Adrenal gland (tissue), 19 donors: ENCODE measurements at regions of chr5 and their contacts with region 1.

Region 1: DNA sequence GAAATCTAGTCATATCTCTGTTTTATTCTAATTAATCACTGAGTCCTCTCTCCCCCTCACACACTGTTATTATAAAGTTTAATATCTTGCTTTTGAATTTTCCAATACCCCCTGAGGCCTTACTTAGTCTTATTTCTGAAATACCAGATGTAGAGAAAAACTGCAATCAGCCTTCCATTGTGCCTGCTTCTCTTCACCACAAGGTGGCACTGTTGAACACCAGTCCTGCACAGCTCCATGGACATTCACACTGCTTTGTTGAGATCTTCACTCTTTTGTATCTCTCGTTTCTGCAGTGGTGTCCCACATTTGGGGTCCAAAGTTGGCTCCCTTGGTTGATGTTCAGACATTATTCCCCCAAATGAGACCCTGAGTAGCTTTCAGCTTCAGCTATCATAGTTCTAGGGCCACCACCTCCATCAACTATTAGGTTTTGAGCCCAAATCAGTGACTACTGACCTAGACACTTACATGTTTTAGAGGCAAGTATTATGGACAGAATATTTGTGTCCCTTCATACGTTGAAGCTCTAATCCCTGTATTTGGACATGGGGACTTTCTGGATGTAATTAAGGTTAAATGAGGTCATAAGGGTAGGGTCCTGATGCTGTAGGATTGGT is 24.3 kb downstream of the BOD1 start:
- DNase-seq: peak in 1 of 7 donors; percentile 30
- H3K4me3 ChIP-seq: no peak overlapping the region
- H3K27ac ChIP-seq: no peak overlapping the region
- H3K4me1 ChIP-seq: peaks cover 17 to 23% of the 10 kb centered on the region in 2 donors
- H3K27me3 ChIP-seq: no peaks in the 10 kb centered on the region
- CTCF ChIP-seq: peak in 5 of 6 experiments; percentile 10 to 52 (median 33)
- POLR2A ChIP-seq: no peak

Region 2: GRCh38 chr5:173451031-173451430 is 141.1 kb before region 1 on chr5:
- intact Hi-C with region 1: loop called in 1 of 2 experiments (anchors 10 kb)
- DNase-seq: peak in 2 of 7 donors; percentile 5 to 32
- H3K4me3 ChIP-seq: no peak overlapping the region
- H3K27ac ChIP-seq: peak overlapping the region in 1 of 5 donors; percentile 70
- H3K4me1 ChIP-seq: peaks cover 0 to 11% of the 10 kb centered on the region in 2 donors
- H3K27me3 ChIP-seq: no peaks in the 10 kb centered on the region
- CTCF ChIP-seq: peak in 4 of 6 experiments; percentile 20 to 39 (median 32)
- POLR2A ChIP-seq: no peak

Region 3: GRCh38 chr5:173625696-173626504 is 33.7 kb after region 1 on chr5:
- intact Hi-C with region 1: no loop called
- DNase-seq: no peak
- H3K4me3 ChIP-seq: no peak overlapping the region
- H3K27ac ChIP-seq: no peak overlapping the region
- H3K4me1 ChIP-seq: peaks cover 0 to 4% of the 10 kb centered on the region in 2 donors
- H3K27me3 ChIP-seq: no peaks in the 10 kb centered on the region
- CTCF ChIP-seq: no peak
- POLR2A ChIP-seq: no peak